Right ventricle myocardium superior (tissue), 1 donor: ENCODE measurements at regions of chr1 and their contacts with region 1.

Region 1: DNA sequence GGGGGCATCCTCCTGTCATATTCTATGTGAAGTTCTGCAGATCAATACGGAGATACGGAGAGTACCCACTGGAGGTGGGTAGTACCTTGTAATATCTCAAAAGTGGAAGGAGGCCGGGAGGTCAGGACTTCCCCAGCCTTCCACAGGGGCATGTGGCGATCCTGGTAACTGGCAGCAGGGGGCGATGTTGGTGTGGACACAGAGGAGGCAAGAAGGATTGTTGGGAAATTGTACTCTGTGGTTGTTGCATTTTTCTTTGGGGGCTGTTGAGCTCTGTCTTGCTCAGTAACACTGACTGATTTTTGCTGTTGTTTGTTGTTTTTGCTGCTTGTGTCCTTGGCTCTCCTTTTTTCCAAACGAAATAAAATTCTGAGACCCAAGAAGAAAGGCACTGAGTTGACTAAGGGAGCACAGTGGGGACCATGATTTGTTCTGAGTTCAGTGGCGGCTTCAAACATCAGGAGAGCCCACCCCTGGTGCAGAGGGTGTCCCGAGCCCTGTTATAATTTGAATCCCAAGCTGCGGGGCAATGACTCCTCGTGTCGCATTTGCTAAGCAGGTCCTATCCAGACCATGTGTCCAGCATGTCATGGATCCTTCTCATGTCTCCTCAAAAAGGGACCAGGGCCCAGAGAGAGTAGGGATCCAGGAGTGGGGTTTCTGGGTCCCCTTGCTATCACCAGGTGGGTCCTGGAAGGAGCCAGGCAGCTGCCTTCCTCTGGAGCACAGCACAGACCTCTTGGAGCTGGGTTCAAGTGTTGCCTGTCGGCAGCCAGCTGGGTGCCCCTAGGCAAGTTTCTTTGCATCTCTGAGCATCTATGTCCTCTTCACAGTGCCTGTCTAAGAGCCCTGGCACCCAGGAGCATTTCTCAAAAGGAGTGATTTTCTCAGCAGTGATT is 22.8 kb downstream of the LHX4 start:
- DNase-seq: peak; percentile 84
- ATAC-seq: peak; percentile 67

Region 2: DNA sequence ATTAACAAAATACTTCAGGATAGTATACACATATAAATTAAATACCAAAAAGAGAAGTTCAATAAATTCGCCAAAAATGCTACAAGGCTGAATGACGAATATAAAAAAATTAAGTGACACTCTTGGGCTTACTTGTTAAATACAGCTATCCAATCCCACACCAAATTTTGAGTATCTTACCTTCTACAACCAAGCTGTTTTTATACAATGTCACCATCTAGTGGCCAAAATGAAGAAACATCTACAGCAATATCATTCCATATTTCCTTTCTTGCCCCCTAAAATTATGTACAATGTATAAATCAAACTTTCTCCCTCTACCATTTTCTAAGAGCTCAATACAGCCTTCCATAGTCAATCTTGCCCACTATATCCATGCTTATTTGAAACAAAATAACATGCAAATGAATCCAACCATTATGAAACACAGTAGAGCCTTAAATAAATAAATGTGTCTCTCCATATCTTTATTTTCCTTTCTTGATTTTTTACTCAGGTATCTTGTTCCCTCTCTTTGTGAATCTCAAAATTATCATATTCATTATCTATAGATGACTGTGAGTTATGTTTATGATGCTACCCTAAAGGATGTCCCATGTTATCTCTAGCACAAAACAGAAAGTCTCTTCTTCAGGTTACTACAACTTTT is 163.2 kb after region 1 on chr1:
- intact Hi-C with region 1: loop called (anchors 2 kb)
- DNase-seq: no peak
- ATAC-seq: peak; percentile 46

Region 3: DNA sequence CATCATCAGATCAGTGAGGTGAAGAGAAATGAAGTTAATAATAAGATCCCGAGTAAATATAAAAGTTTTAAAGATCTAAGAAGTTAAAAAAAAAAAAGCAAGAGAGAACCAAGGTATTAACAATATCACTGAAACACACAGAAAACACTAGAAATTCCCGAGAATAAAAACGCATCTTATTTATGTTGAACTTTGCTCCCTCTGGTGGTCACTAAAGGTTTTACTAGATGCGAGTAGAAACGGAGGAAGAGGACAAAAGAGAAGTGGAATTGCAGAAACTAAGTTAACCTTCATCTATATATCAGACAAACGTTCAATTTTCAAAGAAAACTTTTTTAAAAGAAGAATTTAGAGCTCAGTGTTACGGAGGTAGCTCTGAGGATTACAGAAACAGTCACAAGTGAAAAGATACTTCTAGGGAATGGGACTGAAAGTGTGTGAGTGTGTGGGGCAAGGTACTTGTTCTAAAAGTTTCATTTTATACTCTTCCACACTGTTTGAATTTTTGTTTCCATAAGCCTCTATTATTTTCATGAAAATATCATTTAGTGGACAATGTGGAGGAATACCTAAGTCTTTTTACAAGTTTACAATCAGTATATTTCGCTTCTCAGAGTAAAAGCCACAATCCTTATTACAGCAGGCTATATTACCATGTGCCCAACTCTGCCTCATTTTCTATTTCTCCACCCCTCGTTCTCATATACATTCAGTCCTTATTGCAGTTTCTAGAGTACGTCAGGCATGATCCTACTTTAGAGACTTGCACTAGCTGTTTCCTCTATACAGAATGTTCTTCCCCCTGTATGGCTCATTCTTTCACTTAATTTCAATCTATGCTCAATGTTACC is 229.8 kb after region 1 on chr1:
- intact Hi-C with region 1: loop called (anchors 5 kb)
- DNase-seq: no peak
- ATAC-seq: peak; percentile 67